Left colon (tissue), 2 donors: ENCODE measurements at regions of chr15 and their contacts with region 1.

Region 1: DNA sequence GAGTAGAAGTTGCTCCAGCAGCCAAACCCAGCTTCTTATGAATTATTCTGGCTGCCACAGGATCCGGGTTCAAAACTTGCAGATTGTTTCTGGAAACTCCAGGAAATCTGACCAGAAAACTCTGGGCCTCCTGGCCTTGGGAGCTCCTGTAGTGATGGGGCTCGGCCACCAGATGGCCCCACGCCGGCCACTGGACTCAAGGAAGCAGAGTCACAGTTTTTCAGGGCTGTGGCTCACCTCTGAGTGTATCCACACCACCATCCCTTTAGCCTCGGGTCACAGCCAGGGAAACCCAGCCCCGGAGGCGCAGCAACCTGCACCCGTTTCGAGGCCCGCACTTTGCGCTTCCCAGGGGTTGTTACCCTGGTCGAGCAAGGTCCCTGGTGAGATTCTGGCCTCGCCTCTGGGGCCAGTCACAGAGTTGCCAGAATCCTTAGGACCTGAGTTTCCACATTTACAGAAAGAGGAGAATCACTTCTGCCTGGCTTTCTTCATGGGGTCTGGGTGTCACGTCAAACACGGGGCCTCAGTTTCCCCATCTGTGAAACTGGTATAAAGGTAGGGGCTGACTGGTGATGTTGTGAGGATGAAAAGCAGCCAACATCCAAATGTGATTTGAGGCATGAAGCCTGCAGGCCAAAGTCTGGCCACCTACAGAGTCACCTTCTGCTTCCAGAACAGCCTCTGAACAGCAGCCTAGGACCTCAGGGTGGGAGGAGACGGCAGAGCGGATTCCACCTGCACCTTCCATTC is 53.5 kb upstream of the LCTL start:
- DNase-seq: peak; percentile 78 to 80
- ATAC-seq: peak; percentile 72

Region 2: DNA sequence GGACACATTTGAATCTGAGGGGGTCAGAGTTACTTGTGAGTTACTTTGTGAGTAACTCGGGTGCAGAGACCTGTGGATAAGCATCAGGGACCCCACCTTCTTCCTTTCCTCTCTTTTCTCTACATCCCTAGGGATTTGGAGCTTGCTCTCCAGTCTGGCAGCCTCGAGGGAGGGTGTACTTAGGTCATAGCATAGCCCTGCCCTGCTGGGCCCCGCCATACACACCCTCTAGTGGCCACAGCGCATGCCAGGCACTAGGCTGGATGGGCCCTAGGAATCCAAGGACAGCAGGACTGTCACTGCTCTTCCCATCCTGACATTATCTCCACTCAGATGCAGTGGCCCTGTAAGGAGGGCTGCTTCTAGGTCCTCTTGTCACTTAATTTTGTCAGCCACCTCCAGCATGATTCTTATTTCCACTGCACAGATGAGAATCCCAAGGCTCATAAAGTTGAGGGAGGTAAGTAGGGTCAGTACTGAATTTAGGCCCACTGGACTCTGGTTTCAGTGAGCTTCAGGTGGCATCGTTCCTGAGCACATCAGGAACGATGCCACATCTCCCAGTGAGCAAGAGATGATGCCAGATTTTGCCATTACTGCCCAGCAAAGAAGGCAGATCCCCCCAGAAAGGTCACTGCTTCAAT is 79.1 kb after region 1 on chr15:
- intact Hi-C with region 1: loop called in 1 of 2 experiments (anchors 5 kb)
- DNase-seq: peak; percentile 64 to 78
- ATAC-seq: peak; percentile 40

Region 3: DNA sequence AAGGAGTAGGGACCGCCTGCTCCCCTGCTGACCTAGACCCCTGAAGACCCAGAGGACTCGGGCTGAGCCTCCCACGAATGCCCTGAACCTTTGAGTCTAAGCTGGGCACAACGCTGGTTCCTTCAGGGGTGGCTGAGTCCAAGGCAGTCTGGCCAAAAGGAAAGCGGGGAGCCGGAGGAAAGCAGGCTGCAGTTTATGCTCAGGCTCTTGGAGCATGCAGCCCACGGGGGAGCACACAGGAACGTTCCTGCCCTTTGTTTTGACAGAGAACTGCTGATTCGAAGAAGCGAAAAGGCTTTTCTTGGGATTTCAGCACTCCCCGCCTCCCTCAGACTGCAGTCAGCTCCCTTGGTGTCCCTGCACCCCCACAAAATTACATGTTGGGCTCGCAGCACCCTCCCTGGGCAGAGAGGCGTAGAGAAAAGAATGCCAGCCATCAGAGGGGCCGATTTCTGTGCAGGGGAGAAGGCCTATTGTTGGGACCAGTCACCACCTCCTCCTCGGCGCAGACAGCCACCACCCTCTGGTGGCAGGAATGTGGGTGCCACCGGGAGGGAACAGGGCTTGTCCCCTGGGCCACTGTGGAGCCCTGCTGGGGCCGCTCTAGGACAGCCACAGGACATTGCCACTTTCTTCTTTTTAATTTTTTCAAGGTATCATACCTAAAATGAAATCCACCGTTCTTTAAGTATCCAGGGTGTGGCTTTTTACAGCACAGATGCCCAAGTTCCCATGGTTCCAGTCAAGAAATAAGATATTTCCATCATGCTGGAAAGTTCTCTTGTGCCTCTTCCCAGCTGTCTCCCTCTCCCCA is 154.9 kb after region 1 on chr15:
- intact Hi-C with region 1: loop called in 1 of 2 experiments (anchors 5 kb)
- DNase-seq: peak; percentile 79 to 89
- ATAC-seq: peak; percentile 72